MCF 10A (cell line): ENCODE measurements at regions of chr7 and their contacts with region 1.

Region 1: GRCh38 chr7:151876899-151877777 is at the start of gene PRKAG2:
- DNase-seq: peak; percentile 75
- H3K4me3 Mint-ChIP-seq: peak within 1 kb of the TSS; percentile 88
- H3K27ac Mint-ChIP-seq: no peak within 1 kb of the TSS
- H3K4me1 Mint-ChIP-seq: no peaks in the 10 kb centered on the region
- H3K27me3 Mint-ChIP-seq: peaks cover under 1% of the 10 kb centered on the region
- CTCF ChIP-seq: no peak
- total RNA-seq, gene PRKAG2: 62.5 and 73.9 TPM in 2 replicates

Region 2: GRCh38 chr7:151795168-151795811 is 81.8 kb before region 1 on chr7:
- CTCF ChIA-PET with region 1: interaction called, 5 read pairs
- POLR2A ChIA-PET with region 1: interaction called, 22 read pairs
- intact Hi-C with region 1: loop called (anchors 2 kb)
- DNase-seq: peak; percentile 29
- H3K4me3 Mint-ChIP-seq: no peak overlapping the region
- H3K27ac Mint-ChIP-seq: peak overlapping the region; percentile 51
- H3K4me1 Mint-ChIP-seq: peaks cover 25% of the 10 kb centered on the region
- H3K27me3 Mint-ChIP-seq: no peaks in the 10 kb centered on the region
- CTCF ChIP-seq: no peak

Region 3: DNA sequence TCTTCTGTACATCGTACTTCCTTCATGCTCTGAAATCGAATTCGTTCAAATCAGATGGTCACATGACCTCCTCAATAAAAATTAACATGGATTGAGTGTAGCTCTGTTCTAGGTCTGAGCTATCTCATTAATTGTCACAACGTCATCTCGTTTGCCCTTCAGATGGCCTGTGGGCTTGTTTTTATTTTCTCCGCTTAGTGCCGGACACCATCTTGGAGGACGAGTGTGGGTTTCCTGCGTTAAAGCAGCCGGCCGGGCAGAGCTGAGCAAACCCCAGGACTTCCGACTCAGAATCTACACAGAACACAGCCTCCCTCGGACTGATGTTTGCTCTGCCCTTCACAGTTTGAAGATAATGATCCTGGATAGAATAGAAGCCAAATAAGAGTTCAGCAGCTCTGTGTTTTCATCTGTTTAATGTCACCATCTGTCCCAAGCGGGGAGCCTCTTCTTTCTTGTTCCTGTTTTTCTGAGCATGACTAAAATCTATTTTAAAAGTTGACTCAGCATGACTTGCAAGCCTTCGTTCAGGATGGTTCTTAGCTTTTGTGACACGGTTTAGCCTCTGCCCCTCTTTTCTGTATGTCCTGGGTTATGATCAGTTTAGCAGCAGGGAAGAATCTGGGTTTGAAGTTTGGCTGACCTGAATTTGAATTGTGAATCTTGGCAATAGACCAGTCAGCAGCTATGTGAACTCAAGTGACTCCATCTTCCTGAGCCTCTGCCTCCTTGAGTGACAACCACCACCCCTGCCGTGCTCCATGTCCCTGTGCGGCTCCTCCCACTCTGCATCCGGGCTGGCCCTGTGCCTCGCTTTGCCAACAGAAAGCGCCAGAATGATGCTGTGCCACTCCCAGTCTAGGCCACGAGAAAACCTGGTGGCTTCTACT is 48.6 kb after region 1 on chr7:
- CTCF ChIA-PET with region 1: interaction called, 3 read pairs
- POLR2A ChIA-PET with region 1: interaction called, 20 read pairs
- intact Hi-C with region 1: loop called (anchors 5 kb)
- DNase-seq: no peak
- H3K4me3 Mint-ChIP-seq: no peak overlapping the region
- H3K27ac Mint-ChIP-seq: no peak overlapping the region
- H3K4me1 Mint-ChIP-seq: peaks cover 26% of the 10 kb centered on the region
- H3K27me3 Mint-ChIP-seq: no peaks in the 10 kb centered on the region
- CTCF ChIP-seq: no peak

Region 4: GRCh38 chr7:151936207-151936606 is 59.1 kb after region 1 on chr7:
- CTCF ChIA-PET with region 1: no interaction called
- POLR2A ChIA-PET with region 1: interaction called, 8 read pairs
- intact Hi-C with region 1: loop called (anchors 5 kb)
- DNase-seq: no peak
- H3K4me3 Mint-ChIP-seq: no peak overlapping the region
- H3K27ac Mint-ChIP-seq: no peak overlapping the region
- H3K4me1 Mint-ChIP-seq: peaks cover 23% of the 10 kb centered on the region
- H3K27me3 Mint-ChIP-seq: peaks cover 35% of the 10 kb centered on the region
- CTCF ChIP-seq: no peak

Region 5: GRCh38 chr7:152025077-152025936 is 148.2 kb after region 1 on chr7 and contains the start of gene GALNT11:
- CTCF ChIA-PET with region 1: no interaction called
- POLR2A ChIA-PET with region 1: no interaction called
- intact Hi-C with region 1: loop called (anchors 5 kb)
- DNase-seq: peak; percentile 74
- H3K4me3 Mint-ChIP-seq: peak within 1 kb of the TSS; percentile 84
- H3K27ac Mint-ChIP-seq: peak within 1 kb of the TSS; percentile 94
- H3K4me1 Mint-ChIP-seq: peaks cover 14% of the 10 kb centered on the region
- H3K27me3 Mint-ChIP-seq: no peaks in the 10 kb centered on the region
- CTCF ChIP-seq: no peak
- total RNA-seq, gene GALNT11: 15.1 and 17.3 TPM in 2 replicates

Region 6: DNA sequence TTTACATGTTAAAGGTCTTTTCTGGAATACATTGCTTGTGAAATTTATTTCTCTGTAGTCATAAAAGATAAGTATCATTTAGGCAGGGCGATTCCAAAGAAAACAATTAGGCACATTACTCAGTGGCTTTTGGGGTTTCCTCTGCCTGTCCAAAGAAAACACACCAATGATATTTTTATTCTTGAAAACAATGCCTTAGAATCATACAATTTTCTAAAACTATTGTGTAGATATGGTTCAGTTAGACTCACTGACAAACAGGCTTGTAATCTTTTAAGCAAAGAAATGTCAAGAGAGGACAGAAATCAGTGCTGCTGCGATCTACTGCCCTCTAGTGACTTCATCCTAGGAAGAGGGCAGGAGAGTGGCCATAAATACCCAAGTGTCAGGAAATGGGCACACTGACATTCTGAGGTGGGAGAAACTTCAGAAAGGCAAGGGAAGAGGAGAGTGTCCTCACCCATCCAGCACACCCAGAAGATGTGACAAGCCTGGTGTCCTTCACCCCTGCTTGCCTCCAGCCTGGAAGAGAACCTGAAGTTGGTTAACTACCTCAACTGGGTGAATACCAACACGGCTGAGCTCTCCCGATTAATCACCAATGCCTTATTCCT is 268.8 kb after region 1 on chr7:
- CTCF ChIA-PET with region 1: no interaction called
- POLR2A ChIA-PET with region 1: no interaction called
- intact Hi-C with region 1: loop called (anchors 10 kb)
- DNase-seq: peak; percentile 64
- H3K4me3 Mint-ChIP-seq: no peak overlapping the region
- H3K27ac Mint-ChIP-seq: peak overlapping the region; percentile 39
- H3K4me1 Mint-ChIP-seq: peaks cover 5% of the 10 kb centered on the region
- H3K27me3 Mint-ChIP-seq: no peaks in the 10 kb centered on the region
- CTCF ChIP-seq: peak; percentile 67